Heart left ventricle (tissue), 16 donors: ENCODE measurements at regions of chr2 and their contacts with region 1.

Region 1: DNA sequence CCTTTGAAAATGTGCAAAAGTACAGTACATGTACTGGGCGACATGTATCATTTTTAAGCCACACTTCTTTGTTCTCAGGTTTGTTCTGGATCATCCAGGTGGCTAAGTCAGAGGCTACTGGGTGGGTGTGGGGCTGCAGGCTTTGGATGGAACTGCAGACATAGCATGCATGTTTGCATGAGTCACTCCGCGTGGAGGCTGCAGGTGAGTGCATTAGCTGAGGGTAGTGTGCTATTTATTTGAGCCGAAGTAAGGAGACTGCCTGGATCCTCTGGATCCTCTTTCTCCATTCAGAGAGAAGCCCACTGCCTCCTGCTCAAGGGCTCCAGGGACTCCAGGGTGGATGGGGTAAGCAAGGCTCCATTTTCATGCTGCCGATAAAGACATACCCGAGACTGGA is 9.4 kb upstream of the NEURL3 start:
- DNase-seq: no peak
- ATAC-seq: no peak
- H3K4me3 ChIP-seq: no peak overlapping the region
- H3K27ac ChIP-seq: no peak overlapping the region
- H3K4me1 ChIP-seq: peaks cover 0 to 2% (median 0%) of the 10 kb centered on the region in 12 donors
- H3K27me3 ChIP-seq: no peaks in the 10 kb centered on the region
- CTCF ChIP-seq: no peak
- POLR2A ChIP-seq: no peak

Region 2: GRCh38 chr2:96145036-96145847 is 369.3 kb before region 1 on chr2 and contains the start of gene DUSP2:
- intact Hi-C with region 1: loop called in 2 of 10 experiments (anchors 5 to 10 kb)
- DNase-seq: peak; percentile 77 to 89 (median 79)
- ATAC-seq: peak; percentile 66 to 91 (median 85)
- H3K4me3 ChIP-seq: peak within 1 kb of the TSS; percentile 29 to 69 (median 56)
- H3K27ac ChIP-seq: peak within 1 kb of the TSS; percentile 4 to 90 (median 50)
- H3K4me1 ChIP-seq: peaks cover 0 to 60% (median 27%) of the 10 kb centered on the region in 12 donors
- H3K27me3 ChIP-seq: peaks cover 0 to 7% (median 0%) of the 10 kb centered on the region in 9 donors
- CTCF ChIP-seq: peak in 2 of 12 donors; percentile 20 to 26
- POLR2A ChIP-seq: peak in 1 of 2 donors; percentile 60
- total RNA-seq, gene DUSP2: 0.56 to 11.1 (median 2.7) TPM

Region 3: DNA sequence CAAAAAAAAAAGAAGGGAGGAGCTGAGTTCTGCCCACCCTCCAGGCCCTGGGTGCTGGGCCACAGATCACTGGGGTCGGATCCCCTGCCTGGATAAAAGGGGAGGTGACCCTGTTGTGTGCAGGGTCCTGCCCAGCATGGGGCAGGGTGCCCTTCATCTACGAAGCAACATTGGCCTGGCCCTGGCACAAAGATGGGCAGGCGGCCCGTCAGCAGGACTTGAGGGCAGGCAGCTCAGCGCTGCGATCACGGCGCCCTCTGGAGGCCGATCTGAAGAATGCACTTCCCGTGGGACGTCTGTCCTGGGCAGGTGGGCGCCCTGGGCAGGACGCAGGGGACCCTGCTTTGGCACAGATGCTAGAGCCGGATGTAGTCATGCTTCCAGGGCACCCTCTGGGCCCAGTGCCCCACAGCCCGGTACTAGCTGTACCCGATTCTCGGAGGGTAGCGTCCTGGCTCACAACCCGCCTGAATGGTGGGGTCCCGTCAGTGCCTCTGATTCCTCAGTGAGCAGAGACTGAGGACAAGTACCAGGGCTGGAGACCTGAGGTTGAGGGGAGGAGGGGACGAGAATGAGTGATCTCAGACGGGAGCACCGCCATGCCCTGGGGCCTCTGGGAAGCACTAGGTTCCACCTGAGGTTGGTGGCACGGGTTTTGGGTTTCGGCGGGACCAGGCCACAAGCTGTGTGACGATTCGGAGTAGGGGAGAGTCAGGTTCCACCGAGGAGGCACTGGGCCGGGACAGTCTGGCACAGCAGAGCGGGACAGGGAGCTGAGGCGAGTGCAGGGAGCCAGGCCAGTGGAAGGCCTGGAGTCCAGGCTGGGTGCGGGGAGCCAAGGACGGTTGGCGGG is 40.0 kb after region 1 on chr2:
- intact Hi-C with region 1: loop called in 4 of 10 experiments (anchors 2 to 5 kb)
- DNase-seq: peak; percentile 72 to 87 (median 76)
- ATAC-seq: peak; percentile 59 to 74 (median 72)
- H3K4me3 ChIP-seq: peak overlapping the region in 4 of 12 donors; percentile 10 to 35 (median 26)
- H3K27ac ChIP-seq: peak overlapping the region in 1 of 12 donors; percentile 38
- H3K4me1 ChIP-seq: peaks cover 0 to 15% (median 9%) of the 10 kb centered on the region in 12 donors
- H3K27me3 ChIP-seq: no peaks in the 10 kb centered on the region
- CTCF ChIP-seq: peak; percentile 91 to 100 (median 96)
- POLR2A ChIP-seq: no peak